ENCODE measurements at regions of chr11 and their contacts with region 1.

Region 1: DNA sequence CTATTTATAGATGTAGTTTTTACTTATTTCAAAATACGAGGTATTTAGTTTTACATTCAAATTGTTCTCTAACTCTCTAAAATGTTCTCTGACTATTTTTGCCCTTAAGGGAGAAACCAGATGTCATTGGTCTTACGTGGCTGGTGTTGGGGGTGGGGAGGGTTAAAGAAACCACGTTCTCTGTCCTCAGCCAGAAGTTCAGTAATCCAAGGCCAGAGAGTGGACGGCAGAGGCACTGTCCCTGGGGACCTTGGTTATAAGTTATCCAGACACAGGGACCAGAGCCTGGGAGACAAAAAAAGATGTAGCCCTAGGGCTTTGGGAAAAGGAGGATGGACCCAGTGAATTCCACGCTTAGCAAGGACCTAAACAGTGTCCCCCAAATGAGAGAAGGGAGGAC is 706 bp upstream of the OR51E1 start:
- DNase-seq: no peak
- ATAC-seq: no peak
- H3K4me3 ChIP-seq: no peak overlapping the region
- H3K27ac ChIP-seq: no peak overlapping the region
- H3K4me1 ChIP-seq: no peaks in the 10 kb centered on the region
- H3K27me3 ChIP-seq: no peaks in the 10 kb centered on the region
- CTCF ChIP-seq: no peak

Region 2: DNA sequence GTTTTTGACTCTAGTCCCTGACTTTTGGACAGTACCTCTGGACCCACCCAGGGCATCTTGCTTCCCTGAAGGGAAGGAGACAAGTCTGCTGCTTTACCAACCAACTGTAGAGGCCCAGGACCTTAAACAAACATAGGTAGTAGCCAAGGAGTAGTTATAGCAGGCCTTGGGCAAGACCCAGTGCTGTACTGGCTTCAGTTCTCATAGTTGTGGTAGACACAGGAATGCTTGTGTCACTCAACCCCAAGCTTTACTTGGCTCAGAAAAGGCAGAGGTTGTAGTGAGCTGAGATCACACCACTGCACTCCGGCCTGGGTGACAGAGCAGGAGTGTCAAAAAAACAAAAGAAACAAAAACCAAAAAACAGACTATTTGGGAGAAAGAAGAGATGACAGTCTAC is 119.4 kb before region 1 on chr11:
- intact Hi-C with region 1: no loop called
- DNase-seq: no peak
- ATAC-seq: no peak
- H3K4me3 ChIP-seq: no peak overlapping the region
- H3K27ac ChIP-seq: no peak overlapping the region
- H3K4me1 ChIP-seq: no peaks in the 10 kb centered on the region
- H3K27me3 ChIP-seq: no peaks in the 10 kb centered on the region
- CTCF ChIP-seq: no peak

Region 3: GRCh38 chr11:5004424-5005274 is 361.6 kb after region 1 on chr11:
- intact Hi-C with region 1: loop called in 1 of 2 experiments (anchors 5 kb)
- DNase-seq: peak in 3 of 4 donors; percentile 30 to 67 (median 38)
- ATAC-seq: peak; percentile 76
- H3K4me3 ChIP-seq: no peak overlapping the region
- H3K27ac ChIP-seq: no peak overlapping the region
- H3K4me1 ChIP-seq: no peaks in the 10 kb centered on the region
- H3K27me3 ChIP-seq: no peaks in the 10 kb centered on the region
- CTCF ChIP-seq: peak; percentile 25 to 42